Breast epithelium (tissue), 4 donors: ENCODE measurements at regions of chr1 and their contacts with region 1.

Region 1: DNA sequence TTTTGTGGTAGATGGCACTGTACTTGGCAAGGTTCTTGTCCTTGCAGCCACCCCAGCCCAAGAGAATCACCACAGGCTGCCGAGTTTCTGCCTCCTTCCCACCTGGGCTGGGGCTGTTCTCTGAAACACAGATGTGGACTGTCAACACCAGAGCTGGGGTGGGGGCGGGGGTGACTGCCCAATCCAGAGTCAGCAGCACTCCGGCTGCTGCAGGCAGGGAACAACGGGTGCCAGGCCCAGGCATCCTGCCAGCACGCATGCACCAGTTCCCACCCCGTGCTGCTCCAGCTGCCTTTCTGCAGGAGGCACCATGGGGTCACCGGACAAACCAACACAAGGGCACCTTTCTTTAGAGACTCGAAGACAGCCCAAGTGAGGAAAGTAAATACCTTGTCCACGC is 14.1 kb downstream of the TMEM53 start:
- DNase-seq: peak; percentile 35 to 62
- H3K4me3 ChIP-seq: no peak overlapping the region
- H3K27ac ChIP-seq: no peak overlapping the region
- H3K4me1 ChIP-seq: no peaks in the 10 kb centered on the region
- H3K27me3 ChIP-seq: no peaks in the 10 kb centered on the region
- CTCF ChIP-seq: no peak
- POLR2A ChIP-seq: no peak

Region 2: GRCh38 chr1:42784946-42785693 is 1875.1 kb before region 1 on chr1 and contains the start of gene TMEM269:
- intact Hi-C with region 1: loop called (anchors 5 kb)
- DNase-seq: no peak
- H3K4me3 ChIP-seq: peak within 1 kb of the TSS; percentile 36 to 74 (median 52)
- H3K27ac ChIP-seq: no peak within 1 kb of the TSS
- H3K4me1 ChIP-seq: no peaks in the 10 kb centered on the region
- H3K27me3 ChIP-seq: no peaks in the 10 kb centered on the region
- CTCF ChIP-seq: no peak
- POLR2A ChIP-seq: no peak
- total RNA-seq, gene TMEM269: under 0.01 to 0.59 (median 0.16) TPM